ENCODE measurements at regions of chr11 and their contacts with region 1.

Region 1: GRCh38 chr11:44911029-44911814 is 39.5 kb downstream of the TP53I11 start:
- DNase-seq: peak; percentile 50 to 97 (median 82)
- H3K4me3 ChIP-seq: peak overlapping the region in 27 of 59 donors; percentile 3 to 51 (median 27)
- H3K27ac ChIP-seq: peak overlapping the region in 4 of 59 donors; percentile 33 to 66 (median 52)
- H3K27me3 ChIP-seq: no peaks in the 10 kb centered on the region
- CTCF ChIP-seq: peak; percentile 86 to 98 (median 94)

Region 2: GRCh38 chr11:44095506-44096394 is 815.5 kb before region 1 on chr11 and contains the start of gene EXT2:
- intact Hi-C with region 1: loop called in 1 of 2 experiments (anchors 10 kb)
- DNase-seq: peak; percentile 71 to 94 (median 86)
- H3K4me3 ChIP-seq: peak within 1 kb of the TSS; percentile 64 to 99 (median 87)
- H3K27ac ChIP-seq: peak within 1 kb of the TSS in 47 of 59 donors; percentile 5 to 87 (median 72)
- H3K27me3 ChIP-seq: no peaks in the 10 kb centered on the region
- CTCF ChIP-seq: peak; percentile 84 to 99 (median 96)
- total RNA-seq, gene EXT2: 37.7 to 64.1 (median 50.2) TPM

Region 3: GRCh38 chr11:44286268-44286880 is 624.8 kb before region 1 on chr11:
- intact Hi-C with region 1: loop called in 1 of 2 experiments (anchors 10 kb)
- DNase-seq: peak in 4 of 10 donors; percentile 13 to 54 (median 25)
- H3K4me3 ChIP-seq: no peak overlapping the region
- H3K27ac ChIP-seq: no peak overlapping the region
- H3K27me3 ChIP-seq: peaks cover 0 to 9% (median 0%) of the 10 kb centered on the region in 45 donors
- CTCF ChIP-seq: peak; percentile 53 to 95 (median 89)

Region 4: DNA sequence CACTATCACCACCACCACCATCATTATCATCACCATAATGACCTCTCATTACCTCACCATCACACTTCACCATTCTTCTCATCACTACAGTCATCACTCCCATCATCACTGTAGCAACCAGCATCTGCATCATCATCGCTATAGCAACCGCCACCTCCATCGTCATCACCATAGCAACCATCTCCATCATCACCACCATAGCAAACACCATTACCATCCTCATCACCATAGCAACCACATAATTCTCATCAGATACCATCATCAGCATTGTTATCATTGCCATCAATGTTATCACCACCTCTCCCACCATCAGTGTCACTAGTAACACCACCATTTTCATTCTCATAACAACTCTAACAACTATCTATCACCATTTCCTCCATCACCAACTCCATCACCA is 368.9 kb before region 1 on chr11:
- intact Hi-C with region 1: no loop called
- DNase-seq: no peak
- H3K4me3 ChIP-seq: no peak overlapping the region
- H3K27ac ChIP-seq: no peak overlapping the region
- H3K27me3 ChIP-seq: peaks cover 0 to 2% (median 0%) of the 10 kb centered on the region in 45 donors
- CTCF ChIP-seq: no peak

Region 5: GRCh38 chr11:44556735-44557409 is 354.4 kb before region 1 on chr11:
- intact Hi-C with region 1: loop called (anchors 2 to 5 kb)
- DNase-seq: peak in 8 of 10 donors; percentile 61 to 80 (median 69)
- H3K4me3 ChIP-seq: no peak overlapping the region
- H3K27ac ChIP-seq: peak overlapping the region in 23 of 59 donors; percentile 2 to 74 (median 40)
- H3K27me3 ChIP-seq: no peaks in the 10 kb centered on the region
- CTCF ChIP-seq: peak; percentile 40 to 95 (median 84)

Region 6: GRCh38 chr11:45045683-45046471 is 134.7 kb after region 1 on chr11:
- intact Hi-C with region 1: no loop called
- DNase-seq: peak in 4 of 10 donors; percentile 28 to 66 (median 41)
- H3K4me3 ChIP-seq: no peak overlapping the region
- H3K27ac ChIP-seq: peak overlapping the region in 21 of 59 donors; percentile 3 to 77 (median 50)
- H3K27me3 ChIP-seq: no peaks in the 10 kb centered on the region
- CTCF ChIP-seq: no peak

Measured in dorsolateral prefrontal cortex (tissue), 120 donors.